ENCODE measurements at regions of chr1 and their contacts with region 1.

Region 1: DNA sequence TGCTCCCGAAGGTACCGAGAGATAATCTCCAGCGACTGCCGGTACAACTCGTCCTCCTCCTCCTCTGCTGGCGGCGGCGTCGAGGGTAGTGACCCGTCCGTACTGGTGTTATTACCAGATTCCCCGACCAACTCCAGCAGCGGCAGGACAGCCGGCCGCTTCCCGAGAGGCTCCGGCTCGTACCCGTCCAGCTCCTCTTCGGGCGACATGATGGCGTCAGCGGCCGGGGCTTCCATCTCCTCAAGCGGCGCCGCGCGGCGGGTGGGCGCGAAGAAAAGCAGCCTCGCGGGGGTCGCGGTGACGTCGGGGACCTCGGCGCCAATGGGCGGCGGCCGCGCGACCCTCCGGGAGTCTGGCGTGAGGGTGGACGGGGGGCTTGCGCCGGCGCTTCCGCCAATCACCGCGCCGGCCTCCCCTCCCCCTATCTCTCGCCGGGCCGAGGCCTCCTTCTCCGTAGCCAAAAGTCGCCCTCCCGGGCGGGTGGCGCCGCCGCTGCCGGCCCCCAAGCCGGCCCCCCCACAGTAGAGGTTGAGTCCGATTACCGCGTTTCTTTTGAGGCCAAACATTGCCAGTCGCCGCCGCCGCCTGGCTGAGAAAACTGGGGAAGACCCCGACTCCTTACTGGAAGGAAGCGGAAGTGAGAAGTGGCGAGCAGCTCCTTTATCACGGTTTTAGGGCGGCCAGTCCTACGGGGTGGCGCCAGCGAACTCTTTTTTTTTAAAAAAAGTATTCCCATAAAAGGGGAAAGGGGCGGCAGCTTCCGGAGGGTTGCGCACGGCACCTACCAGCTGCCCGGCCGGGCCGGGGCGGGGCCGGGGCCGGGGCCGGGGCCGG is at the start of gene MCL1:
- DNase-seq: peak; percentile 96
- H3K4me3 ChIP-seq: peak within 1 kb of the TSS; percentile 91 to 99 (median 92)
- H3K27ac ChIP-seq: peak within 1 kb of the TSS; percentile 98
- H3K4me1 ChIP-seq: peaks cover 28% of the 10 kb centered on the region
- H3K27me3 ChIP-seq: no peaks in the 10 kb centered on the region
- CTCF ChIP-seq: no peak
- POLR2A ChIP-seq: peak; percentile 99
- total RNA-seq, gene MCL1: 186 and 212 TPM in 2 replicates

Region 2: DNA sequence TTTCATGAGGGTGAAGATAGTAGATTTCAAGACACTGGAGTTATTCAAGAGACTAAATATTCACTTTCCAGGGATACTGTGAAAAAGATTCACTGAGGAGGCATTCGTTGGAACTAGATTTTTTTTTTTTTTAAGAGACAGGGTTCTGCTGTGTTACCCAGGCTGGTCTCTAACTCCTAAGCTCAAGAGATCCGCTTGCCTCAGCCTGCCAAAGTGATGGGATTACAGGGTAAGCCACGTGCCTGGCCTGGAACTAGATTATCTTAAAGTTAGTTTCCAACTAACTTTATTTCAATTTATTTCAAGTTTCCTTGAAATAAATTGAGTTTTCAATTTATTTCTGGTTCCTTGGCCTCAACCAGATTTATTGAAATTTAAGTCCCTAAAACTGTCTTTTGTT is 24.5 kb after region 1 on chr1:
- CTCF ChIA-PET with region 1: interaction called, 20 read pairs
- POLR2A ChIA-PET with region 1: interaction called, 13 read pairs
- dilution Hi-C with region 1: no loop called
- intact Hi-C with region 1: loop called (anchors 1 kb)
- DNase-seq: no peak
- H3K4me3 ChIP-seq: no peak overlapping the region
- H3K27ac ChIP-seq: peak overlapping the region; percentile 100
- H3K4me1 ChIP-seq: peaks cover 17% of the 10 kb centered on the region
- H3K27me3 ChIP-seq: no peaks in the 10 kb centered on the region
- CTCF ChIP-seq: no peak
- POLR2A ChIP-seq: no peak

Region 3: GRCh38 chr1:150621497-150622302 is 42.5 kb after region 1 on chr1:
- CTCF ChIA-PET with region 1: interaction called, 147 read pairs
- POLR2A ChIA-PET with region 1: interaction called, 43 read pairs
- dilution Hi-C with region 1: no loop called
- intact Hi-C with region 1: loop called (anchors 1 kb)
- DNase-seq: peak; percentile 73
- H3K4me3 ChIP-seq: no peak overlapping the region
- H3K27ac ChIP-seq: peak overlapping the region; percentile 27
- H3K4me1 ChIP-seq: peaks cover 30% of the 10 kb centered on the region
- H3K27me3 ChIP-seq: no peaks in the 10 kb centered on the region
- CTCF ChIP-seq: peak; percentile 65 to 66
- POLR2A ChIP-seq: no peak

Region 4: GRCh38 chr1:150696590-150697524 is 117.7 kb after region 1 on chr1 and contains the start of gene GOLPH3L:
- CTCF ChIA-PET with region 1: no interaction called
- POLR2A ChIA-PET with region 1: no interaction called
- dilution Hi-C with region 1: no loop called
- intact Hi-C with region 1: loop called (anchors 1 kb)
- DNase-seq: peak; percentile 100
- H3K4me3 ChIP-seq: peak within 1 kb of the TSS; percentile 72 to 96 (median 87)
- H3K27ac ChIP-seq: peak within 1 kb of the TSS; percentile 57
- H3K4me1 ChIP-seq: peaks cover 32% of the 10 kb centered on the region
- H3K27me3 ChIP-seq: no peaks in the 10 kb centered on the region
- CTCF ChIP-seq: peak in 1 of 2 donors; percentile 15
- POLR2A ChIP-seq: peak; percentile 73
- total RNA-seq, gene GOLPH3L: 33.2 and 34.9 TPM in 2 replicates